Cardiac septum (tissue), 1 donor: ENCODE measurements at regions of chr2 and their contacts with region 1.

Region 1: GRCh38 chr2:110146183-110146944 is 30.7 kb upstream of the MALL start:
- DNase-seq: no peak

Region 2: GRCh38 chr2:110126086-110126773 is 20.1 kb before region 1 on chr2:
- intact Hi-C with region 1: loop called (anchors 2 kb)
- DNase-seq: no peak